ENCODE measurements at regions of chr16 and their contacts with region 1.

Region 1: DNA sequence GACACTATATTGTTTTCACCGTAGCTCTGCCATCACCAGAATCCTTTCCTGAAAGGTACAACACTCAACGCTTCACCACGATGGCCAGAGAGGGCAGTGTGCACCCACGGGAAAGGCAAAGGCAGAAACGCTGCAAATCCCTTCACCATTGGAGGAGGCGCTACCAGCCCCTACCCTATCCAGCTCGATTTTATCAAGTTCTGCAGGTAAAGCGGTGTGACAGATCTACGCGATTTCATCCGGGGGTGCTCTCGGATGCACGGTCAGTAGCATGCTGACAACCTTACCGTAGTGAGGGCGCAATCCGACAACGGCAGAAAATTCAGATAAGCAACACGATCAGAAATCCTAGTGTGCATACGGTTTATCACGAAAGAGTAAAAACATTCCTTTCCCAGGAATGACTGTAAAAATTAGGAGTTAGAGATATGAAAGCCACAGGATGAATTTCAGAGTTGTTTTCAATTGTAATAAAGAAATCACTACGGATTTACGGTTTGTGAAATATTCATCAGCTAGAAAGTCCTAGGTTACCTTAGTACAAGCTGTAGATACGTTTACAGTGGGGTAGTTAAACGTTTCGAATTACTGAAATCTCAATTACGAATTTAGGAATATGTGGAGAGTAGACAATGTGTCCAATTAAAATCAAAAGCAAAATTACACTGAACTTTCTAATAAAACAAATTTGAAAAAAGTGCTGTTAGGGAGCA is 1.8 kb downstream of the NETO2 start:
- DNase-seq: peak; percentile 95
- H3K4me3 Mint-ChIP-seq: peak overlapping the region; percentile 80
- H3K27ac Mint-ChIP-seq: peak overlapping the region; percentile 91
- H3K4me1 Mint-ChIP-seq: peaks cover 27% of the 10 kb centered on the region
- H3K27me3 Mint-ChIP-seq: no peaks in the 10 kb centered on the region
- CTCF ChIP-seq: peak; percentile 86

Region 2: GRCh38 chr16:46973207-46973995 is 168.5 kb before region 1 on chr16 and contains the start of gene DNAJA2:
- CTCF ChIA-PET with region 1: interaction called, 11 read pairs
- POLR2A ChIA-PET with region 1: interaction called, 32 read pairs
- intact Hi-C with region 1: loop called (anchors 2 kb)
- DNase-seq: peak; percentile 87
- H3K4me3 Mint-ChIP-seq: peak within 1 kb of the TSS; percentile 74
- H3K27ac Mint-ChIP-seq: peak within 1 kb of the TSS; percentile 96
- H3K4me1 Mint-ChIP-seq: peaks cover 12% of the 10 kb centered on the region
- H3K27me3 Mint-ChIP-seq: no peaks in the 10 kb centered on the region
- CTCF ChIP-seq: no peak
- total RNA-seq, gene DNAJA2: 64.7 and 64.8 TPM in 2 replicates

Region 3: GRCh38 chr16:47156680-47157215 is 14.8 kb after region 1 on chr16:
- CTCF ChIA-PET with region 1: interaction called, 35 read pairs
- POLR2A ChIA-PET with region 1: no interaction called
- intact Hi-C with region 1: no loop called
- DNase-seq: no peak
- H3K4me3 Mint-ChIP-seq: no peak overlapping the region
- H3K27ac Mint-ChIP-seq: no peak overlapping the region
- H3K4me1 Mint-ChIP-seq: no peaks in the 10 kb centered on the region
- H3K27me3 Mint-ChIP-seq: no peaks in the 10 kb centered on the region
- CTCF ChIP-seq: no peak

Region 4: DNA sequence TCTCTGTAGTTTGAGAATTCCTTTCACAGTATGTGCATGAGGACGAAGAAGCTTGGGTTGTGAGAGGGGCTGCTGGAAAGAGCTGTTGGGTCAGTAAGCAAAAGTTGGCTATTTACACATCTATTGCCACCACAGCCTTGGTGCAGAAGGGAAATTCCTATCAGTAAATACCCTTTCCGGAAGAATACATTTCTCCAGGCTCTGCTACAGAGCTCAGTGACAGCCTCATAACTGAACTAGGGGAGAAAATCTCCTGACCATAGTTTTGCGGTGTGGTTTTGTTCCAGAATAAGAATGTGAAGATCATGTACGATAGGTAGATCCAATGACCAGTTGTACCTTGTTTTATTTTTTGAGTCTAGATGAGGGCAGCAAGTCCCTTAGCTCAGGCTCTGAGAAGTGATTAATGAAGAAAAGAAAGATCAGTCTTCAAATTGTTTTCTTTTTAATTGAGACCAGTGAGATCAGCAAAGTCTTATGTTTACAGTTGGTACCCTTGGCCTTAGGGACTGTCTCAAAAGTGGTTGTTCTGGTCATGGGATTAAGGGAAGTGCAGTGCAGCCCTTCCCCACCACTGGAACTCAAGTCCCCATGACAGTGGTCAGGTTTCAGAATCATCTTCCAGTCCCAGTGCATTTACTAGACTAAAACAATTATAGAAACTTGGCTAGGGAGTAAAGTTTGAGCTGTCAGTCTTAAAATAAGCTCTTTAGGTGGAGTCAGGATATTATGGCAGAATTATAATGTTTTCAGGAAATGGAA is 442.7 kb after region 1 on chr16:
- CTCF ChIA-PET with region 1: interaction called, 11 read pairs
- POLR2A ChIA-PET with region 1: no interaction called
- intact Hi-C with region 1: loop called (anchors 10 kb)
- DNase-seq: no peak
- H3K4me3 Mint-ChIP-seq: no peak overlapping the region
- H3K27ac Mint-ChIP-seq: no peak overlapping the region
- H3K4me1 Mint-ChIP-seq: no peaks in the 10 kb centered on the region
- H3K27me3 Mint-ChIP-seq: no peaks in the 10 kb centered on the region
- CTCF ChIP-seq: no peak

Region 5: GRCh38 chr16:48113471-48113870 is 971.5 kb after region 1 on chr16:
- CTCF ChIA-PET with region 1: interaction called, 19 read pairs
- POLR2A ChIA-PET with region 1: no interaction called
- intact Hi-C with region 1: no loop called
- DNase-seq: peak; percentile 25
- H3K4me3 Mint-ChIP-seq: no peak overlapping the region
- H3K27ac Mint-ChIP-seq: no peak overlapping the region
- H3K4me1 Mint-ChIP-seq: no peaks in the 10 kb centered on the region
- H3K27me3 Mint-ChIP-seq: peaks cover 36% of the 10 kb centered on the region
- CTCF ChIP-seq: peak; percentile 15

Region 6: GRCh38 chr16:48609652-48610029 is 1467.7 kb after region 1 on chr16:
- CTCF ChIA-PET with region 1: interaction called, 4 read pairs
- POLR2A ChIA-PET with region 1: interaction called, 9 read pairs
- intact Hi-C with region 1: loop called (anchors 5 kb)
- DNase-seq: peak; percentile 46
- H3K4me3 Mint-ChIP-seq: no peak overlapping the region
- H3K27ac Mint-ChIP-seq: peak overlapping the region; percentile 100
- H3K4me1 Mint-ChIP-seq: peaks cover 12% of the 10 kb centered on the region
- H3K27me3 Mint-ChIP-seq: no peaks in the 10 kb centered on the region
- CTCF ChIP-seq: no peak

Measured in MCF 10A (cell line).